ENCODE measurements at regions of chr1 and their contacts with region 1.

Region 1: DNA sequence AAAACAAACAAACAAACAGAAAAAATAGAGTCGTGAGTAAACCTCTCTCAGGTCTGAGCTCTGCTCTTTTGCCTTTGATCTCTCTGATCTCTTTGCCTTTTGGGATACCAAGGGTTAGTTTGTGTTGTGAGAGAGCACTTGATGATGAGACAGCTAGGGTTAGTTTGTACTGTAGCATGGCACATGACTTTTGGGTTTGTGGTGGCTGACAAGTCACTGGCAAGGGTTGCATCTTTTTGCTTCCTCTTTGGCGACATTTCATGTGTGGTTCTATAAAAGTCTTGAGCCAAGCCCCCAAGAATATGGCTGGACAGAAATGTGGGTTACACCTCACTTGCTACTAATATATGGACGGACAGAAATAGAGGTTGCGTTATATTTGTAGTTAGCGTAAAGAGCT is 60.5 kb downstream of the TESK2 start:
- DNase-seq: no peak
- ATAC-seq: peak; percentile 14
- H3K4me3 ChIP-seq: no peak overlapping the region
- H3K4me3 Mint-ChIP-seq: peak overlapping the region; percentile 55
- H3K27ac ChIP-seq: peak overlapping the region in 1 of 2 donors; percentile 51
- H3K27ac Mint-ChIP-seq: peak overlapping the region; percentile 89
- H3K4me1 ChIP-seq: peaks cover 7 to 14% of the 10 kb centered on the region in 2 donors
- H3K4me1 Mint-ChIP-seq: peaks cover 19% of the 10 kb centered on the region
- H3K27me3 ChIP-seq: no peaks in the 10 kb centered on the region
- H3K27me3 Mint-ChIP-seq: no peaks in the 10 kb centered on the region
- CTCF ChIP-seq: no peak

Region 2: GRCh38 chr1:45465277-45465676 is 34.8 kb after region 1 on chr1:
- CTCF ChIA-PET with region 1: no interaction called
- POLR2A ChIA-PET with region 1: interaction called, 5 read pairs
- intact Hi-C with region 1: loop called (anchors 5 kb)
- DNase-seq: no peak
- ATAC-seq: no peak
- H3K4me3 ChIP-seq: no peak overlapping the region
- H3K4me3 Mint-ChIP-seq: no peak overlapping the region
- H3K27ac ChIP-seq: no peak overlapping the region
- H3K27ac Mint-ChIP-seq: no peak overlapping the region
- H3K4me1 ChIP-seq: peaks cover 15 to 16% of the 10 kb centered on the region in 2 donors
- H3K4me1 Mint-ChIP-seq: peaks cover 33% of the 10 kb centered on the region
- H3K27me3 ChIP-seq: no peaks in the 10 kb centered on the region
- H3K27me3 Mint-ChIP-seq: no peaks in the 10 kb centered on the region
- CTCF ChIP-seq: no peak

Region 3: DNA sequence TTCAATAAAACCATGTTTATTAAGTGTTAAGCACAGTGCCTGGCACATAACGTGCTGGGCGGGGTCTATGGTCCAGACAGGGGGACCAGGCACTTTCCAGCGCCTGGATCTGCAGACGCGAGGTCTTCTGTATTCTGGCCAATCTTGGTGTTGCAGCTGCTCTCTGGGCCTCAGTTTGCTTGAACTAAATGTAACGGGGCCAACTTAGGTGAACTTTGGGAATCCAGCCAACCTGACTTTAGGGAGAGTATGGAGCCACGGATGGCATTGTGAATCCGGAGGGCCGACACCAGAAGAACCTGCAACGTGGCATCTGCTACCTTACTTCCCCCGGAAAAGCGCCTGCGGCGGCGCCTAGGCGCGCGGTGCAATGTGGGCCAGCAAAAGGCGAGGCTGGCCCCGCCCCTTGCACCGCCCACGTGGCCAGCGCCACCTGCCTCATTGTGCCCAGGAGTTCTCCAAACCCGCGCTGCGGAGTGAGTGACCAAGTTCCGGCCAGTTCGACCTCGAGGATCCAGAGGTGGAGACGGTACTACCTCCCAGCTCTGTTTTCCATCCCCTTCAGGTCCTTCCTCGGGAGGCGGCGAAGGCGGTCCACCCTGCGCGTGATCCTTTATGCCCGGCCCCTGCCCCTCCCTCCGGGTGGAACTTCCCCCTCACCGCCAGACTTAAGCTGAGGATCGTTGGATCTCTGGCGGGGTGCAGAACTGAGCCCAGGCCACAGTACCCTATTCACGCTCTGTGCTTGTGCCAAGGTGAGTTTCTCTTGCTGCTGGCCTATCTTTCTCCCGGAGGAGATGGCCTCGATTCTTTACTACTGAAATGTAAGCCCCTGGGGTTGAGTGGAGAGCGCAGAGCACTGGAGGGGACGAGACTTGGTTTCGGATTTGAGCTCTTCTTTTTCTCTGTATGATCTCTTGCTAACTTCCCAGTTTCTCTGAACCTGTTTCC is 120.2 kb after region 1 on chr1 and contains the start of gene AKR1A1:
- CTCF ChIA-PET with region 1: no interaction called
- POLR2A ChIA-PET with region 1: no interaction called
- intact Hi-C with region 1: no loop called
- DNase-seq: peak; percentile 96
- ATAC-seq: peak; percentile 93
- H3K4me3 ChIP-seq: peak within 1 kb of the TSS; percentile 65 to 100 (median 90)
- H3K4me3 Mint-ChIP-seq: peak within 1 kb of the TSS; percentile 97
- H3K27ac ChIP-seq: peak within 1 kb of the TSS; percentile 84 to 96
- H3K27ac Mint-ChIP-seq: peak within 1 kb of the TSS; percentile 96
- H3K4me1 ChIP-seq: peaks cover 23 to 28% of the 10 kb centered on the region in 2 donors
- H3K4me1 Mint-ChIP-seq: peaks cover 30% of the 10 kb centered on the region
- H3K27me3 ChIP-seq: no peaks in the 10 kb centered on the region
- H3K27me3 Mint-ChIP-seq: no peaks in the 10 kb centered on the region
- CTCF ChIP-seq: no peak
- total RNA-seq, gene AKR1A1: 101 and 145 TPM in 2 replicates

Region 4: DNA sequence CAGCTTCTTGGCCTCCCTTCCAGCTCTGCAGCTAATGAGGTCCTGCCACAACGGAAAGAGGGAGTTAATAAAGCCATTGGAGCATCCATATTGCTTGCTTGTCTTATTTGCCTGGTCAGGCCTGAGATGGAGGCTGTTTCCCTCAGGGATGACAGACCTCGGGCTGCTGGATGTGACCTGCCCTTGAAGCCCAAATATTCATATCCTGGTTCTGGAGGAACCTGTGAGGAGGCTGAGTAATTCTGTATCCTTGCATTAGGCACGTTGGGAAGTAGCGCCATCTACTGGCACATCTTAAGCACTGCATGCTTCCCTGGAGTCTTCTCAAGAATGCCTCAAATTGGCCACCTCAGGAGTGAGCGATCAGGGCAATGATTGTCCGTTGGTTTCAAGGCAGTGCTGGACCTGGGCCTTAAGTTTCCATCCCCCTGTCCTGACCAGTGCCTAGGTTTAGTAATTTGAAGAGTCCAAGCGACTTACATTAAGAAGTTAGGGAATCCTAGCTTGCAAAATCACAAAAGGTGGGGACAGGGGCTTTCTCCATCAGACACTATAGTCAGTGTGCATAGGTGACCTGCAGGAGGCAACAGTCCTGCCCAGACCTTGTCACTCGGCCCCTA is 139.6 kb after region 1 on chr1:
- CTCF ChIA-PET with region 1: no interaction called
- POLR2A ChIA-PET with region 1: no interaction called
- intact Hi-C with region 1: no loop called
- DNase-seq: peak; percentile 85
- ATAC-seq: peak; percentile 97
- H3K4me3 ChIP-seq: no peak overlapping the region
- H3K4me3 Mint-ChIP-seq: no peak overlapping the region
- H3K27ac ChIP-seq: peak overlapping the region in 1 of 2 donors; percentile 0
- H3K27ac Mint-ChIP-seq: peak overlapping the region; percentile 56
- H3K4me1 ChIP-seq: no peaks in the 10 kb centered on the region
- H3K4me1 Mint-ChIP-seq: peaks cover 2% of the 10 kb centered on the region
- H3K27me3 ChIP-seq: no peaks in the 10 kb centered on the region
- H3K27me3 Mint-ChIP-seq: no peaks in the 10 kb centered on the region
- CTCF ChIP-seq: peak; percentile 99